ENCODE measurements at regions of chr11 and their contacts with region 1.

Region 1: GRCh38 chr11:59615637-59616395 is at the start of gene OSBP:
- DNase-seq: peak; percentile 98
- ATAC-seq: peak; percentile 96
- total RNA-seq, gene OSBP: 38.5 TPM

Region 2: GRCh38 chr11:59448484-59448883 is 167.3 kb before region 1 on chr11:
- intact Hi-C with region 1: no loop called
- DNase-seq: no peak
- ATAC-seq: no peak

Region 3: DNA sequence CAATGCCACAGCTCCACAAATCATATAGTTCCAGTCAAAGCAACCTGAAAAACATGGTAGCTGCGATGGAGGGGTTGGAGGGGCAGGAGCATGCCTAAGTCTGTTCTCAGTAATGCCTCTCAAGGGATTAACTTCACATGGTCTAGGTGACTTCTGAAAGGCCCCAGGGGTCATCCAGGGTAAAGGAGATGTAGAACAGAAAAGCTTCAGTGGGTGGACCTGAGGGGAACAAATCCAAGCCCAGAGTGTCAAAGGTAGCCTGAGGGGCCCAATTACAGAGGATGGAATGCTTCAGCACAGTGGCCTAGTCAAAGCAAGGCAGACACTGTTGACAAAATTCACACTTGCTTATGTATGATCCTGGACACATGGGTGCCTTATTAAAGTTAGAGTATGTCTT is 81.1 kb before region 1 on chr11:
- intact Hi-C with region 1: loop called (anchors 5 kb)
- DNase-seq: no peak
- ATAC-seq: no peak

Region 4: GRCh38 chr11:59550368-59550841 is 65.4 kb before region 1 on chr11:
- intact Hi-C with region 1: loop called (anchors 2 kb)
- DNase-seq: peak; percentile 76
- ATAC-seq: peak; percentile 84

Region 5: DNA sequence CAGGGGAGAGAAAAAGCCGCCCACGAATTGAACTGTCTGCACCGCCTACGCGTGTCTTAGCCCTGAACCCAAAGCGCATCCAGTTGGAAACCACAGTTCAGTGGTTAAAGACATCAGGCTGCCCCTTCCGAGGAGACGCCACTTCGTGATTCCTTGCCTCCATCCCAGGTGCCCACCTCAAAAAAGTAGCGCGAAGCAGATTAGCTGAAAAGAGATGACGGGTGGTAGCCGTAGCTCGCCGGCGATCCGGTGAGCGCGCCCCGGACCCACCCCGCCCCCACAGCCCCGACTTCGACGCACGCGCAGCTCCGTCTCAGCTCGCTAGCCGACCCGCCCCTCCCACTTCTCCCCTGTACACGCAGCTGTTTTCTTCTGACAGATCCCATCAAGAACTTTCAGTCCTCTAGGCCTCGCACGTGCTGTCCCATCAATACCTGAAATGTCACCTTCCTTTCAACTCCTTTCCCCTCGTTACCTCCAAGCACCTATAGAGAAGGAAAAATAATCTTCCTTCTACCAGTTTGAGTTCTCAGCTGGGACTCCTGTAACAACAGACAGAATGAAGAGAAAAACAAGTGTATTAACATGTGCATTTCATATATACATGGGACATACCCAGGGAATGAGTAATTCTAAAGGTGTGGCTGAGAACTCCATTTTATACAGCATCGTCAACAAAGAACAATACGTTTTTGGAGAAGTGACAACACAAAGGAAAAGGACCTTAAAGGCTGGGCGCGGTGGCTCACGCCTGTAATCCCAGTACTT is 54.9 kb before region 1 on chr11:
- intact Hi-C with region 1: loop called (anchors 5 kb)
- DNase-seq: peak; percentile 92
- ATAC-seq: peak; percentile 89

Region 6: GRCh38 chr11:59668950-59669610 is 53.3 kb after region 1 on chr11 and contains the start of gene PATL1:
- intact Hi-C with region 1: loop called (anchors 1 kb)
- DNase-seq: peak; percentile 100
- ATAC-seq: peak; percentile 98
- total RNA-seq, gene PATL1: 22.3 TPM

Region 7: DNA sequence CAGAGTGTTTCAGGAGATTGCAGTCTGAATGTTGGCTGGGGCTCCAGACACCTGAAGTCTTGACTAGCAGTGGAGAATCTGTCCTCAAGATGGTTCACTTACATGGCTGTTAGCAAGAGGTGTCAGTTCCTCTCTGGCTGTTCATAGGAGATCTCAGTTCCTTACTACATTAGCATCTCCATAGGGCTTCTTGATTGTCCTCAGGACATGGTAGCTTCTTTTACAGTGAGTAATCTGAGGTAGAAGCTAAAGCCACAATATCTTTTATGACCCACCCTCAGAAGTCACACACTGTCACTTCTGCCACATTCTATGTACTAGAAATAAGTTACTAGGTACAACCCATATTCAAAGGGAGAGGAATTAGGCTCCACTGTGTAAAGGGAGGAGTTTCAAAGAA is 63.5 kb after region 1 on chr11:
- intact Hi-C with region 1: no loop called
- DNase-seq: no peak
- ATAC-seq: no peak